ENCODE measurements at regions of chr14 and their contacts with region 1.

Region 1: DNA sequence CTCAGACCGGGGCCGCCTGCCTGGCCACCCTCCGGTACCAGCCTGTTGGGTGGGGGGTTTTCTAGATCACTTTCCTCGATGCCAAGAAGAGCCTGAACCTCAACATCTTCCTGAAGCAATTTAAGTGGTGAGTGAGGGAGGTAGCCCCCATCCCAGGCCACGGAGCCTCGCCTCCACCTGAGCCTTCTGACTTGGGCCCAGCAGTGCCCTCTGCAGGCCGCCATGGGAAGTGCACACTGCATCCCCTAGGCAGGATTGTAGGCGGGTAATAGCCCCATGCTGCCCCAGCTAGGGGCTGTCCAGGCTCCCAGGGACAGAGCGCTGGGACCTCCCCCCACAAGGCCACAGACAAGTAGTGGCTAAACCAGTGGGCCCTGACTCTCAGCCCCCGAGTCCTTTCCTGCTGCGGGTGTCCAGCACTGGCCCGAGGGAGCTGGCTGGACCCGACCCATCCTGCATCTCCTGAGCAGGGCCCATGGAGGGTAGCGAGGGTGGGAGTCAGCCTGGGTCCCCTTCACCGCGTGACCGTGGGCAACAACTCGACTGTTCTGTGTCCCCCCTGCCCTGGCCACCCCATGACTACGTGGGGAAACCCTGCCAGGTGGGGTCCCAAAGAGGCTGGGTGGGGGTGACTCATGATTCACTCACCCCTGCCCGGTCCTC is 15.3 kb upstream of the ADSS1 start:
- DNase-seq: peak; percentile 78
- H3K4me3 ChIP-seq: no peak overlapping the region
- H3K27ac ChIP-seq: no peak overlapping the region
- H3K4me1 ChIP-seq: no peaks in the 10 kb centered on the region
- H3K27me3 ChIP-seq: no peaks in the 10 kb centered on the region
- CTCF ChIP-seq: peak; percentile 97 to 98 (median 98)
- EP300 ChIP-seq: no peak
- POLR2A ChIP-seq: no peak

Region 2: GRCh38 chr14:104650057-104650981 is 58.4 kb before region 1 on chr14:
- in situ Hi-C with region 1: loop called in 2 of 4 experiments (anchors 10 kb)
- intact Hi-C with region 1: loop called (anchors 2 kb)
- DNase-seq: peak; percentile 71
- H3K4me3 ChIP-seq: peak overlapping the region in 3 of 4 donors; percentile 11 to 37 (median 23)
- H3K27ac ChIP-seq: no peak overlapping the region
- H3K4me1 ChIP-seq: peaks cover 0 to 11% (median 10%) of the 10 kb centered on the region in 4 donors
- H3K27me3 ChIP-seq: no peaks in the 10 kb centered on the region
- CTCF ChIP-seq: peak; percentile 93 to 100 (median 100)
- EP300 ChIP-seq: no peak
- POLR2A ChIP-seq: no peak

Region 3: GRCh38 chr14:104976198-104977007 is 267.7 kb after region 1 on chr14:
- in situ Hi-C with region 1: no loop called
- intact Hi-C with region 1: no loop called
- DNase-seq: peak; percentile 91
- H3K4me3 ChIP-seq: no peak overlapping the region
- H3K27ac ChIP-seq: peak overlapping the region in 1 of 4 donors; percentile 19
- H3K4me1 ChIP-seq: peaks cover 58 to 72% (median 67%) of the 10 kb centered on the region in 4 donors
- H3K27me3 ChIP-seq: peaks cover 43% of the 10 kb centered on the region
- CTCF ChIP-seq: peak; percentile 91 to 97 (median 95)
- EP300 ChIP-seq: no peak
- POLR2A ChIP-seq: no peak

Measured in transverse colon (tissue), 4 donors.